ENCODE measurements at regions of chr7 and their contacts with region 1.

Region 1: DNA sequence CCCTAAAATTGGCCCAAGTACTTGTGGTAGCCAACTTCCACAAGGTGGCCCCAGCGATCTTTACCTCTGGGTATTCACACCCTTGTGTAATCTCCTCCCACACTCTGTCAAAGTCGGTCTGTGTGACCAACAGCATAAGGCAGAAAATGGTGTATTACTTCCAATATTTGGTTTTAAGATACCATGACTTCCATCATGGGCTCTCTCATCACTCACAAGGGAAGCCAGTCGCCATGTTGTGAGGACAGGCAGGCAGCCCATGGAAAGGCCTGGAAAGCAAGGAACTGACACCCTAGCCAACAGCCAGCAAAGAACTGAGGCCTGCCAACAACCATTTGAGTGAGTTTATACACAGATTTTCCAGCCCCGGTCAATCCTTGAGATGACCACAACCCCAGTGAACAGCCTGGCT is 91.0 kb upstream of the KMT2E start:
- DNase-seq: peak; percentile 81
- H3K4me3 Mint-ChIP-seq: no peak overlapping the region
- H3K27ac Mint-ChIP-seq: peak overlapping the region; percentile 41
- H3K4me1 Mint-ChIP-seq: peaks cover 4% of the 10 kb centered on the region
- H3K27me3 Mint-ChIP-seq: peaks cover 1% of the 10 kb centered on the region

Region 2: DNA sequence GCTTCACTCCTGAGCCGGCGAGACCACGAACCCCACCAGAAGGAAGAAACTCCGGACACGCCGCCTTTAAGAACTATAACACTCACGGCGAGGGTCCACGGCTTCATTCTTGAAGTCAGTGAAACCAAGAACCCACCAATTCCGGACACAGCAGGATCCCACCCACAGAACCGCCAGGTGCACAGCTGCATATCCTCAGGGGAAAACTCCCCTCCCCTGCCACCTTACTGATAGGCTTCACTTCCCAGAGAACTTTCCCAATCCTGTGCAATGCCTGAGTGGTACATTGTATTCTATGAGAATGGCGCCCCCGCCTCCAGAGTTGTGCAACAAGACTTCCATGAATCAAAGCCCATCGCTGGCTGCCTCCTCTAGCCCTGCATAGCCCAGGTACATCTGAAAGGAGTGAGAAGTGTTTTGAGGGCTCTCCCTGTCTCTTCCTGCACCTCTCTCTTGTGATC is 18.3 kb after region 1 on chr7:
- CTCF ChIA-PET with region 1: interaction called, 6 read pairs
- POLR2A ChIA-PET with region 1: interaction called, 10 read pairs
- DNase-seq: peak; percentile 14
- H3K4me3 Mint-ChIP-seq: peak overlapping the region; percentile 76
- H3K27ac Mint-ChIP-seq: peak overlapping the region; percentile 91
- H3K4me1 Mint-ChIP-seq: peaks cover 54% of the 10 kb centered on the region
- H3K27me3 Mint-ChIP-seq: no peaks in the 10 kb centered on the region

Region 3: GRCh38 chr7:105346593-105347322 is 423.7 kb after region 1 on chr7:
- CTCF ChIA-PET with region 1: no interaction called
- POLR2A ChIA-PET with region 1: interaction called, 10 read pairs
- DNase-seq: peak; percentile 61
- H3K4me3 Mint-ChIP-seq: peak overlapping the region; percentile 40
- H3K27ac Mint-ChIP-seq: peak overlapping the region; percentile 91
- H3K4me1 Mint-ChIP-seq: peaks cover 65% of the 10 kb centered on the region
- H3K27me3 Mint-ChIP-seq: no peaks in the 10 kb centered on the region

Measured in activated CD4-positive, alpha-beta T cell treated with anti-CD3 and anti-CD28 coated beads, Interleukin-2, amount 10 ng/mL, durations not matched to agents 7 days and 5 days (primary cell).